Activated CD4-positive, alpha-beta T cell treated with anti-CD3 and anti-CD28 coated beads for 36 hours (primary cell): ENCODE measurements at regions of chr6 and their contacts with region 1.

Region 1: DNA sequence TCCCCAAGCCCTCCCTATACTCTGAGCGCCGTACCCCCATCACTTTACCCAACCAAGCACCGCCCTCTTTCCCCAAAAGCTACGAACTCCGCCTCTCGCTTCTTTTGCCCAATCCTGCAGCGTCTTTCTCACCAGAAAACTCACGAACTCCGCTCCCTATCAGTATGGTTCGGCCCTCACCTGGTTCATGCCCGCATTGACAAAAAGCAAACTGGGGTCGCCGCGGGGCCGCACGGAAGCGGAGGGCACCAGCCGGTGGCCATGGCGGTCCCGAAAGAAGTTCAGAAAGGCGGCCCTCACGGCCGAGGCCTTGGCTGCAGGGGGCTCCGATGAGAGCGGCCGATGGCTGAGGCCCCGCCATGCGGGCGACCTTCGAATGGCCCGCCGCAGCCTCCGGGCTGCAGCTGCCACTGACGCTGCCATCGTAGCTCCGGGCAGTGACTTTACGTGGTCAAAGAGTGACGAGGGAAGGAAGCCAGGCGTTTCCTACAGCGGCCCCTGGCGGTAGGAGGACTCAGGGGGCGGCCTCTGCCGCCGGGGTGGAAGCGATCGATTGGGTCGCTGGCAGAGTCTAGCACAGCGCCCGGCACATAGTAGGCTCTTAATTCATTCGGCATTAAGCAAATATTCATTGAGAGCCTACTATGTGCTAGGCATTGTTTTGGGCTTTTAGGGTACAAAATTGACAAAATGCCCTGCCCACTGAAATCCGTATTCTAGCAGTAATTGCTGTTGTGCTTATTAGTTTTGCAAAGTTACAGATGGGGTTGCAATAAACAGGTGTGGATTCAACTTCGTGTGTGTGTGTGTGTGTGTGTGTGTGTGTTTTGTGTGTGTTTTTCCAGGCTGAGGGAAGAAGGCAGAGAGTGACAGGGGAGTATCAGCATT is at the start of gene AARS2:
- DNase-seq: peak; percentile 96
- ATAC-seq: peak; percentile 96
- H3K4me3 Mint-ChIP-seq: peak within 1 kb of the TSS; percentile 98
- H3K27ac Mint-ChIP-seq: peak within 1 kb of the TSS; percentile 86
- H3K4me1 Mint-ChIP-seq: peaks cover 14% of the 10 kb centered on the region
- H3K27me3 Mint-ChIP-seq: peaks cover 1% of the 10 kb centered on the region
- total RNA-seq, gene AARS2: 15.2 to 17.5 TPM

Region 2: GRCh38 chr6:44221291-44221960 is 91.7 kb before region 1 on chr6:
- CTCF ChIA-PET with region 1: interaction called, 7 read pairs
- POLR2A ChIA-PET with region 1: interaction called, 5 read pairs
- intact Hi-C with region 1: loop called in 1 of 2 experiments (anchors 1 kb)
- DNase-seq: peak; percentile 90
- ATAC-seq: peak; percentile 70
- H3K4me3 Mint-ChIP-seq: peak overlapping the region; percentile 10
- H3K27ac Mint-ChIP-seq: peak overlapping the region; percentile 69
- H3K4me1 Mint-ChIP-seq: peaks cover 48% of the 10 kb centered on the region
- H3K27me3 Mint-ChIP-seq: peaks cover 3% of the 10 kb centered on the region

Region 3: DNA sequence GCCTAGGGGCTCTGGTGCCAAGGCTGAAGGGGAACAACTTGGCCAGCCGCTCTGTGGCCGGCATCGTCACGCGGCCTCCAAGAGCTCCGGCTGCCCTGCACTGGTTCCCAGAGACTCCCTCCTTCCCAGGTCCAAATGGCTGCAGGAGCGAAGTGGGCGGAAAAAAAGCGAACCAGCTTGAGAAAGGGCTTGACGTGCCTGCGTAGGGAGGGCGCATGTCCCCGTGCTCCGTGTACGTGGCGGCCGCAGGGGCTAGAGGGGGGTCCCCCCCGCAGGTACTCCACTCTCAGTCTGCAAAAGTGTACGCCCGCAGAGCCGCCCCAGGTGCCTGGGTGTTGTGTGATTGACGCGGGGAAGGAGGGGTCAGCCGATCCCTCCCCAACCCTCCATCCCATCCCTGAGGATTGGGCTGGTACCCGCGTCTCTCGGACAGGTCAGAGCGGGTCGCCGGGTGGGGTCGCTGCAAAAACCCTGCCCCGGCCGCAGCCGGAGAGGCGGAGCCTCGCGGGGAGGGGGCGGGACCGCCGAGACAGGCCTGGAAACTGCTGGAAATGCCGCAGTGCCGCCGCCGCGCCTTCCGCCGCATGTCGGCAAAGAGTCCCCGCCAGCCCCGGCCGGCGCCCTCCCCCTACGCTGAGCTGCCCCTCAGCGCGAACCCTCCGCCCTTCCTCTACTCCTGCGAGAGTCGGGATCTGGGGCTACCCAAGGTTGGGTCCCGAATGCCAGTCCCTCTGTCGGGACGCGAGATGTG is 67.1 kb before region 1 on chr6:
- CTCF ChIA-PET with region 1: no interaction called
- POLR2A ChIA-PET with region 1: no interaction called
- intact Hi-C with region 1: no loop called
- DNase-seq: peak; percentile 92
- ATAC-seq: peak; percentile 47
- H3K4me3 Mint-ChIP-seq: peak overlapping the region; percentile 97
- H3K27ac Mint-ChIP-seq: peak overlapping the region; percentile 99
- H3K4me1 Mint-ChIP-seq: peaks cover 37% of the 10 kb centered on the region
- H3K27me3 Mint-ChIP-seq: no peaks in the 10 kb centered on the region

Region 4: GRCh38 chr6:44297063-44298038 is 15.8 kb before region 1 on chr6:
- CTCF ChIA-PET with region 1: interaction called, 10 read pairs
- POLR2A ChIA-PET with region 1: no interaction called
- intact Hi-C with region 1: no loop called
- DNase-seq: peak; percentile 78
- ATAC-seq: peak; percentile 91
- H3K4me3 Mint-ChIP-seq: peak overlapping the region; percentile 33
- H3K27ac Mint-ChIP-seq: no peak overlapping the region
- H3K4me1 Mint-ChIP-seq: peaks cover 6% of the 10 kb centered on the region
- H3K27me3 Mint-ChIP-seq: peaks cover 31% of the 10 kb centered on the region

Region 5: GRCh38 chr6:44332585-44332984 is 19.4 kb after region 1 on chr6:
- CTCF ChIA-PET with region 1: interaction called, 30 read pairs
- POLR2A ChIA-PET with region 1: no interaction called
- intact Hi-C with region 1: no loop called
- DNase-seq: no peak
- ATAC-seq: peak; percentile 42
- H3K4me3 Mint-ChIP-seq: no peak overlapping the region
- H3K27ac Mint-ChIP-seq: no peak overlapping the region
- H3K4me1 Mint-ChIP-seq: no peaks in the 10 kb centered on the region
- H3K27me3 Mint-ChIP-seq: peaks cover 14% of the 10 kb centered on the region

Region 6: GRCh38 chr6:44338228-44339122 is 25.3 kb after region 1 on chr6:
- CTCF ChIA-PET with region 1: interaction called, 30 read pairs
- POLR2A ChIA-PET with region 1: no interaction called
- intact Hi-C with region 1: no loop called
- DNase-seq: peak; percentile 81
- ATAC-seq: peak; percentile 84
- H3K4me3 Mint-ChIP-seq: no peak overlapping the region
- H3K27ac Mint-ChIP-seq: no peak overlapping the region
- H3K4me1 Mint-ChIP-seq: peaks cover 5% of the 10 kb centered on the region
- H3K27me3 Mint-ChIP-seq: peaks cover 15% of the 10 kb centered on the region

Region 7: GRCh38 chr6:44475779-44476434 is 162.8 kb after region 1 on chr6:
- CTCF ChIA-PET with region 1: no interaction called
- POLR2A ChIA-PET with region 1: no interaction called
- intact Hi-C with region 1: no loop called
- DNase-seq: peak; percentile 86
- ATAC-seq: peak; percentile 94
- H3K4me3 Mint-ChIP-seq: no peak overlapping the region
- H3K27ac Mint-ChIP-seq: no peak overlapping the region
- H3K4me1 Mint-ChIP-seq: no peaks in the 10 kb centered on the region
- H3K27me3 Mint-ChIP-seq: no peaks in the 10 kb centered on the region